Activated naive CD4-positive, alpha-beta T cell treated with anti-CD3 and anti-CD28 coated beads for 36 hours (primary cell): ENCODE measurements at regions of chr6 and their contacts with region 1.

Region 1: DNA sequence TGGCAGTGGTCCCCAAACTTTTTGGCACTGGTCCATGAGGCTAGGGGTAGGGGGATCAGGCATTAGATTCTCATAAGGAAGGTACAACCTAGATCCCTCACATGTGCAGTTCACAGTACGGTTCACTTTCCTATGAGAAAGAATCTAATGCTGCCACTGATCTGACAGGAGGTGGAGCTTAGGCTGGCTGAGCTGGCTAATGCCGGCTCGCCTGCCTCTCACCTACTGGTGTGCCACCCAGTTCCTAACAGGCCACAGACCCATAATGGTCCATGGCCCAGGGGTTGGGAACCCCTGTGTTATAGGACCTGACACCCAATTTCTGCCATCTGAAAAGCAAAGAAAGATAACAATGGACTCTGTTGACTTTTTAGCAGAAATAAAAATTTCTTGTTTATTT is 199.6 kb downstream of the GMPR start:
- DNase-seq: no peak
- H3K4me3 Mint-ChIP-seq: peak overlapping the region; percentile 78
- H3K27ac Mint-ChIP-seq: peak overlapping the region; percentile 89
- H3K4me1 Mint-ChIP-seq: peaks cover 65% of the 10 kb centered on the region
- H3K27me3 Mint-ChIP-seq: no peaks in the 10 kb centered on the region

Region 2: GRCh38 chr6:16481697-16482399 is 43.9 kb after region 1 on chr6:
- CTCF ChIA-PET with region 1: no interaction called
- intact Hi-C with region 1: loop called (anchors 2 kb)
- DNase-seq: peak; percentile 79
- H3K4me3 Mint-ChIP-seq: peak overlapping the region; percentile 32
- H3K27ac Mint-ChIP-seq: peak overlapping the region; percentile 75
- H3K4me1 Mint-ChIP-seq: peaks cover 70% of the 10 kb centered on the region
- H3K27me3 Mint-ChIP-seq: no peaks in the 10 kb centered on the region

Region 3: DNA sequence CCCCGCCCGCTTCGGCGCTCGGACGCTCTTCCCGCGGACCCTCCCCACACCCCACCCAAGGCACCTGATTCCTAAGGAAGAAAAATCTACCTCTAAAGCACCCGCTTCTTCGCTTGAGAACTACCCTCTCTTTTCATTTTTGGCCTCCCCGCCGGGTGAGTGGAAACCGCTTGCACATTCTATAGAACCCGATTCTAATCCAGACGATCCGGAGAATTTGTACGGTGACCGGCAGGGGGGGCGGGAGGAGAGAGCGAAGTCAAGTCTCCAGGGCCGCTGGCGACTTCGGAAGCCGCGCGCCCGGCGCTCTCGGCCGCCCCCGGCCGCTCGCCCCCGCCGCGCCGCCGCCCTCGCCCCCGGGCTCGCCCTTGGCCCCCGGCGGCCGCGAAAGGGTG is 843.1 kb after region 1 on chr6 and contains the start of gene RBM24:
- CTCF ChIA-PET with region 1: no interaction called
- intact Hi-C with region 1: no loop called
- DNase-seq: peak; percentile 64
- H3K4me3 Mint-ChIP-seq: peak within 1 kb of the TSS; percentile 57
- H3K27ac Mint-ChIP-seq: no peak within 1 kb of the TSS
- H3K4me1 Mint-ChIP-seq: peaks cover 10% of the 10 kb centered on the region
- H3K27me3 Mint-ChIP-seq: peaks cover 56% of the 10 kb centered on the region
- total RNA-seq, gene RBM24: not detected